Activated CD4-positive, alpha-beta T cell treated with anti-CD3 and anti-CD28 coated beads, Interleukin-2, amount 10 ng/mL, durations not matched to agents 7 days and 5 days (primary cell): ENCODE measurements at regions of chr2 and their contacts with region 1.

Region 1: DNA sequence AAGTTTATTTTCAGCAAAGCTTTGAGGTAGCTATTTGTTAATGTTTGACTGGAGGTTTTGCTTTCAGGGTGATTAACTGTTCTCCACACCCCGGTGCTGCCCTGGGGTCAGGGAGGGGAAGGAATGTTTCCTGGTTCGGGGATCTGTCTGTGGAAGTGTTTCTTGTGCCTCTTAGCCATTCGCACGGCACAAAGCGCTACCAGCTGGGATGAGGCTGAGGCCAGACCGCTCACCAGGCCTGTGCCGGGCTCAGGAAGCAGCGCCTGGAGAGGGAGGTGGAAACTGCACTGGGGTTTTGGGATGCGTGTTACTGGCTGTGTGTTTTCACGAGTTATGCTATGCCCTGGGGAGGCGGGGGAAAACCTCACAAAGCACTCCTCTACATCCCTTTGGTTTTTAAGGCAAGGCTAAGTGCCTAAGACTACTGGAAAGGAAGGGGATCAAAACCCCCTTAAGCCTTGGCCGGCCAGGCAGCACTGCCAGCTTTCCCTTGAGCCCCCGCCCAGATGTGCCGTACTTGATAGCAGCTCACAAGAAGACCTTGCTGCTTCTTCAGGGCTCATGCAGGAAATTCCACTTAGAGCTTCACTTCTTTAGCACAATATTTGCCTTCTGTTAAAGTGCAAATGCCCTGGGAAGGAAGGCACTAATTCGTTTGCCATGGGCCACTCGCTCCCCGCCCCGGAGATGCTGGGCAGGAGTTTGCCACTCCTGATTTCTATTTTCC is 65.7 kb upstream of the CNGA3 start:
- DNase-seq: no peak
- H3K4me3 Mint-ChIP-seq: no peak overlapping the region
- H3K27ac Mint-ChIP-seq: no peak overlapping the region
- H3K4me1 Mint-ChIP-seq: no peaks in the 10 kb centered on the region
- H3K27me3 Mint-ChIP-seq: peaks cover 26% of the 10 kb centered on the region

Region 2: DNA sequence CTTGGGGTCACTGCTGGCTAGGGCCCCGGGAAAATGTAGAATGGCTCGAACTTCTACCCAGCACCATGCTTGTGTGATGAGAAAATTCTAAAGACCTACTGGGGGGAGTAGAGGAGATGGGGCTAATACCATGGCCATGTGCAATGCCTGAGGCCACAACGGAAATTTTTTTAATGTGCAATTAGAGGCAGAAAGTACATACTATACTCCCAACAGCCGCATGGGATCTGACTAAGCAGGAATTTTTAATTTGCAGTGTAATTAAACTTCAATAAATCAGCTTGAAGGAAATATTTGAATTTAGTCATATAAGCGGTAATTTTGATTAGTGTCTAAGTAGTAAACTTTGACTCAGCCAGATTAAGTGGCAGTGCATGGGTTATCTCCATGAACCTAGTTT is 12.5 kb after region 1 on chr2:
- CTCF ChIA-PET with region 1: no interaction called
- POLR2A ChIA-PET with region 1: no interaction called
- DNase-seq: no peak
- H3K4me3 Mint-ChIP-seq: no peak overlapping the region
- H3K27ac Mint-ChIP-seq: no peak overlapping the region
- H3K4me1 Mint-ChIP-seq: no peaks in the 10 kb centered on the region
- H3K27me3 Mint-ChIP-seq: peaks cover 15% of the 10 kb centered on the region

Region 3: GRCh38 chr2:98348066-98348561 is 67.6 kb after region 1 on chr2:
- CTCF ChIA-PET with region 1: no interaction called
- POLR2A ChIA-PET with region 1: interaction called, 13 read pairs
- DNase-seq: no peak
- H3K4me3 Mint-ChIP-seq: no peak overlapping the region
- H3K27ac Mint-ChIP-seq: no peak overlapping the region
- H3K4me1 Mint-ChIP-seq: peaks cover 2% of the 10 kb centered on the region
- H3K27me3 Mint-ChIP-seq: peaks cover 73% of the 10 kb centered on the region